ENCODE measurements at regions of chr1 and their contacts with region 1.

Region 1: DNA sequence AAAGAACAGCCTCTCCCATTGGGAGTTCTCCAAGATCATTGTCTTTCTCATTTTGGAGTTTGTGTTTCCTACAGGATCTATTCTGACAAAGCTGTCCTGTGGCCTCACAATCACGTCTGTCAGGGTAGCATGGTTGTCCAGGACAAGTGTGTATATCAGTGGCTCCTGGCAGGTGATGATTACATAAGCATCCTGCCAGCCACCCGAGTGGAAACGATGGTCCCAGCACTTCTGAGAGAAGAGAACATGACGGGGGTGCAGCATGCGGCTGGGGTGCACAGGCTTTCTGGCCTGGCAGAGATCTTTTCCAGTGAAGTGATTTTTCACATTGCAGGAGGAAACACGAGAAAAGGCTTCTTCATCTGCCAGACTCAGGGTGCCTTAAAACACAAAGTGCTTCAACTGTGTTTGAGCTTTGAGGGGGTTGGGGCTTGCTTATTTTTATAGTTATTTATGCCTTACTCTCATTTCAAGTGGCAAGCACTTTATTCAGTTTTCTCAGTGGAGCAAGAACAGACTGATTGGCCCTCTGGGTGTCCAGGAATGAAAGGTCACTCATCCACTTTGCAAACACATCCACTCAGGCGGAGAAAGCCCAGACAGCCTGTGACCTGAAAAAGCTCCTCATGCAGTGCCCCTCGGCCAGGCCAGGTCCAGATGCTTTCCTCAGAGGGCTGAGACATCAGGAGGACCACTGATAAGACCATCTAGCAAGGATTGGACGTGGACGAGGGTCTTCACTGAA is 186.0 kb downstream of the DUSP10 start:
- DNase-seq: no peak
- ATAC-seq: no peak

Region 2: DNA sequence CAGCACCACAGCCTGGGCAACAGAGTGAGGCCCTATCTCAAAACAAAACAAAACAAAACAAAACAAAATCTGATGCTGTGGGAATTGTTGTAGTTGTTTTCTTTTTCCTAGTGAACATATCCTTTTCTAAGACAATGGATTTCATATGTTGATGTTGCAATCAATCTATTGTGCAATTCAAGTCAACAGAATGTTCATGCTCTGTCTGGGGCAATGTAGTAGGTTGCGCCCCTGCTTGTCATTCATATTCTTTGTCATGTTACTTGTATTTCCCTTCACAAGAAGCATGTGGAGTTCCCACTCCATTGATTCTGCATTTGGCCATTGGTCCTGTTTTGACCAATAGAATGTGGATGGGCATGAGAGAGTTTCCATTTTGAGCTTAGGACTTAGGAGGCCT is 37.9 kb before region 1 on chr1:
- intact Hi-C with region 1: loop called (anchors 1 kb)
- DNase-seq: no peak
- ATAC-seq: peak; percentile 71

Measured in sciatic nerve (tissue), 2 donors.